ENCODE measurements at regions of chr2 and their contacts with region 1.

Region 1: GRCh38 chr2:234071664-234072063 is 21.2 kb downstream of the SPP2 start:
- DNase-seq: peak in 8 of 35 experiments; percentile 9 to 35 (median 17)
- ATAC-seq: peak in 2 of 4 experiments; percentile 30 to 55
- H3K4me3 ChIP-seq: no peak overlapping the region
- H3K4me3 Mint-ChIP-seq: no peak overlapping the region
- H3K27ac ChIP-seq: no peak overlapping the region
- H3K27ac Mint-ChIP-seq: peak overlapping the region in 1 of 2 donors; percentile 41
- H3K4me1 ChIP-seq: peaks cover 0 to 22% of the 10 kb centered on the region in 2 experiments
- H3K4me1 Mint-ChIP-seq: peaks cover 13 to 21% (median 20%) of the 10 kb centered on the region in 3 donors
- H3K27me3 ChIP-seq: no peaks in the 10 kb centered on the region
- H3K27me3 Mint-ChIP-seq: no peaks in the 10 kb centered on the region

Region 2: GRCh38 chr2:234081970-234082822 is 10.5 kb after region 1 on chr2:
- CTCF ChIA-PET with region 1: no interaction called
- POLR2A ChIA-PET with region 1: no interaction called
- DNase-seq: no peak
- ATAC-seq: no peak
- H3K4me3 ChIP-seq: no peak overlapping the region
- H3K4me3 Mint-ChIP-seq: no peak overlapping the region
- H3K27ac ChIP-seq: no peak overlapping the region
- H3K27ac Mint-ChIP-seq: no peak overlapping the region
- H3K4me1 ChIP-seq: peaks cover 0 to 10% of the 10 kb centered on the region in 2 experiments
- H3K4me1 Mint-ChIP-seq: peaks cover 11 to 20% (median 15%) of the 10 kb centered on the region in 3 donors
- H3K27me3 ChIP-seq: no peaks in the 10 kb centered on the region
- H3K27me3 Mint-ChIP-seq: peaks cover 16% of the 10 kb centered on the region in 2 donors

Region 3: GRCh38 chr2:234111523-234111922 is 39.9 kb after region 1 on chr2:
- CTCF ChIA-PET with region 1: no interaction called
- POLR2A ChIA-PET with region 1: interaction called in 1 of 2 experiments, 15 read pairs
- DNase-seq: no peak
- ATAC-seq: no peak
- H3K4me3 ChIP-seq: no peak overlapping the region
- H3K4me3 Mint-ChIP-seq: no peak overlapping the region
- H3K27ac ChIP-seq: no peak overlapping the region
- H3K27ac Mint-ChIP-seq: no peak overlapping the region
- H3K4me1 ChIP-seq: no peaks in the 10 kb centered on the region
- H3K4me1 Mint-ChIP-seq: no peaks in the 10 kb centered on the region
- H3K27me3 ChIP-seq: peaks cover 0 to 3% of the 10 kb centered on the region in 2 experiments
- H3K27me3 Mint-ChIP-seq: peaks cover 3 to 5% of the 10 kb centered on the region in 2 donors

Measured in T-cell (primary cell).